ENCODE measurements at regions of chr12 and their contacts with region 1.

Region 1: GRCh38 chr12:106136263-106136662 is 2.5 kb downstream of the NUAK1 start:
- DNase-seq: peak; percentile 91 to 99
- H3K4me3 ChIP-seq: peak overlapping the region; percentile 18
- CTCF ChIP-seq: peak in 1 of 3 donors; percentile 67
- POLR2A ChIP-seq: no peak

Region 2: DNA sequence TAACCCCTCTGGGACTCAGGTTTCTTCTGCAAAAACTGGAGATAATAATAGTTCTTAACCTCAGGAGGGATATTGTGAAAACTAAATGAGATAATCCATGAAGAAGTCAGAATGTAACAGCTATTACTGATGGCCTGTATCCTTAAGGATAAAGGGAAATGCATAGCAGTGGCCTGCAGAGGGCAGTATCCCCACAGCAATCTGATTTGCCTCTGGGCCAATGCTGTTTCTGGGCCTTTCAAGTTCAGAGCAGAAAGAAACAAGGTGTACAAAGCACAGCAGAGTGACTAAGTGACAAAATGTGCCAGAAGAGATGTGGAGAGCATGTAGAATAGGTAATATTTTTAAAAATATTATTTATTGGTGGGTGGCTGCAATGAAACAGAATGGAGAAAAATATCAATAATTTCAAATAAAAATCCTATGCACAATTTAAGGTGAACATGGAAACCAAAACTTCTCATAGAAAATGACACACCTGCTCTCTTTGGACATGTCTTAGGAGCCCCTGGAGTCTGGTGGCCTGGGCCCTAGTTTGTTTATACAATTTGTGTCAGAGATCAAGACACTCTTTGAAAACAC is 715.5 kb before region 1 on chr12:
- intact Hi-C with region 1: loop called (anchors 5 kb)
- DNase-seq: peak; percentile 76 to 93
- H3K4me3 ChIP-seq: no peak overlapping the region
- CTCF ChIP-seq: peak in 2 of 3 donors; percentile 25 to 33
- POLR2A ChIP-seq: no peak